Transverse colon (tissue), 4 donors: ENCODE measurements at regions of chr11 and their contacts with region 1.

Region 1: DNA sequence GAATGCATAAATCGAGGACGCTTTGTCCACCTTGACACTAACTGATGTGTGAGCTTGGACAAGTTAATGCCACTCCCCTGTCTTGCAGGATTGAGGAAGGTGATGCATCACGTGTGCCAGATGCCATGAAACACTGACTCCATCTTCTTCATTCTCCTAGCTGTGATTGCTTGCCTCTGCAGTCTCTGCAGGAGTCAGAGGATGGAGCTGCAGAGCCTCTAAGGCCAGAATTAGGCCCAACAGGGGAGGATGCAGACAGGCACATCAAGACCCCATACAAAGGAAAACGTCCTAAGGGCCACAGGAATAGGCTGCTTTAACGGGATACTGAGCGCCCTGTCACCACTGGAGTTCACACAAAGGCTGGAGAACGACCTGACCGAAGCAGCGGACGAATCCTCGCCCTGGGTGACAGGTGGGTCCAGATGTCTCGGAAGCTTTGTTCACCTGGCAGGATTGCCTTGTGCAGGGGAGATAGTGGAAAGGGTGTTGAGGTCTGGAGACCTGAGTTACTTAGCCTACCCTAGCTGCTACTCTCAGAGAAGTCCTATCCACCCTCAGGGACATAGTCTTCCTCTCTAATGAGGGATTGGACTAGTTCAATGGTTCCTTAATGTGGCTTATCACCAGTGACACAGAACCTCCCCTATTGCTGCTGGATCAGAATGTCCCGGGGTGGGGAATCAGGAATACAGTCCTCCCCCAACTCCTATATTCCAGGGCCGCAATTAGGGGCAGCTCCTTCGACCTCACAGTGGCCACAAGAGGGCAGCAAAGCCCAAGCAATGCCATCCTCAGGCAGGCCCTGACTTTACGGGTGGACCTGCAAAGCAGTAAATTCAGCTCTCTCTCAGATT is 32.4 kb downstream of the DBX1 start:
- DNase-seq: peak; percentile 85
- H3K4me3 ChIP-seq: no peak overlapping the region
- H3K27ac ChIP-seq: no peak overlapping the region
- H3K4me1 ChIP-seq: peaks cover 0 to 23% (median 3%) of the 10 kb centered on the region in 4 donors
- H3K27me3 ChIP-seq: peaks cover 4% of the 10 kb centered on the region
- CTCF ChIP-seq: peak; percentile 79 to 88 (median 84)
- EP300 ChIP-seq: no peak
- POLR2A ChIP-seq: no peak

Region 2: GRCh38 chr11:19951558-19952115 is 176.3 kb before region 1 on chr11:
- in situ Hi-C with region 1: loop called in 3 of 4 experiments (anchors 10 to 25 kb)
- intact Hi-C with region 1: loop called (anchors 1 kb)
- DNase-seq: no peak
- H3K4me3 ChIP-seq: no peak overlapping the region
- H3K27ac ChIP-seq: no peak overlapping the region
- H3K4me1 ChIP-seq: peaks cover 6 to 26% (median 12%) of the 10 kb centered on the region in 4 donors
- H3K27me3 ChIP-seq: no peaks in the 10 kb centered on the region
- CTCF ChIP-seq: peak; percentile 67 to 79 (median 73)
- EP300 ChIP-seq: no peak
- POLR2A ChIP-seq: no peak

Region 3: DNA sequence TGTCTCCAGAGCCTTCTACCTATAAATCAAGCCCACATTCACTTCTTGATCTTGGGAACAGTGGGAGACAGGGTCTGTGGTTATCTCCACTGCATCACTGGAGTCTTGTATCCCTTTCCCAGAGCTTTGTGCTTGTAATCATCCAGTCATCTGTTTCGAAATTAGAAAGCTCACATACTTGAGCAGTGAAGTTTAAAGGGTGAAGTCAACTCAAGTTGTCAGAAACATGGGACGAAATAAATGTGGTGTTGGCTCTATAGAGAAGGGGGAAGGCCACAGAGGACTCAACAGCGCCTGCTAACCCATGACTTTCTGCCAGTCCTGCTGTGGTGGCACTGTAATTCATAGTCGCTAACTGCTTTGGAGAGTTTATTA is 165.1 kb before region 1 on chr11:
- in situ Hi-C with region 1: loop called in 3 of 4 experiments (anchors 10 to 25 kb)
- intact Hi-C with region 1: no loop called
- DNase-seq: no peak
- H3K4me3 ChIP-seq: no peak overlapping the region
- H3K27ac ChIP-seq: no peak overlapping the region
- H3K4me1 ChIP-seq: no peaks in the 10 kb centered on the region
- H3K27me3 ChIP-seq: no peaks in the 10 kb centered on the region
- CTCF ChIP-seq: no peak
- EP300 ChIP-seq: no peak
- POLR2A ChIP-seq: no peak

Region 4: DNA sequence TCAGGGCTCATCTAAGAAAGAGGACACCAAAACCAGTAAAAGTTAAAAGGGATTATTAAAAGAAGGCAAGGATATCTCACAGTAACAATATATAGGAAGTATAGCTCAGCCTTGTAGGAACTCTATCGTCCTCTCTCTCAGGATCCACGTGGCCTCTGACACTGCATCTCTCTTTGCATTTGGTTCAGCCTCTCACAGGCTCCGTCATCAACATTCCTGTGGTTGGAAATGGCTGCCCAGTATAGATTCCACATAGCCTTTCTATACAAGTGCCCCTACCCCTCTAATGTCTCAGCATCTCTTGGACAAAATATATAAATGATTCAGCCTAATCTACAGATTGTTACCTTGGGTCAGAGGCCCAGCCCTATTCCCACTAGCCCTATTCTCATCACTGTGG is 133.6 kb after region 1 on chr11:
- in situ Hi-C with region 1: no loop called
- intact Hi-C with region 1: no loop called
- DNase-seq: no peak
- H3K4me3 ChIP-seq: no peak overlapping the region
- H3K27ac ChIP-seq: no peak overlapping the region
- H3K4me1 ChIP-seq: no peaks in the 10 kb centered on the region
- H3K27me3 ChIP-seq: no peaks in the 10 kb centered on the region
- CTCF ChIP-seq: no peak
- EP300 ChIP-seq: no peak
- POLR2A ChIP-seq: no peak

Region 5: DNA sequence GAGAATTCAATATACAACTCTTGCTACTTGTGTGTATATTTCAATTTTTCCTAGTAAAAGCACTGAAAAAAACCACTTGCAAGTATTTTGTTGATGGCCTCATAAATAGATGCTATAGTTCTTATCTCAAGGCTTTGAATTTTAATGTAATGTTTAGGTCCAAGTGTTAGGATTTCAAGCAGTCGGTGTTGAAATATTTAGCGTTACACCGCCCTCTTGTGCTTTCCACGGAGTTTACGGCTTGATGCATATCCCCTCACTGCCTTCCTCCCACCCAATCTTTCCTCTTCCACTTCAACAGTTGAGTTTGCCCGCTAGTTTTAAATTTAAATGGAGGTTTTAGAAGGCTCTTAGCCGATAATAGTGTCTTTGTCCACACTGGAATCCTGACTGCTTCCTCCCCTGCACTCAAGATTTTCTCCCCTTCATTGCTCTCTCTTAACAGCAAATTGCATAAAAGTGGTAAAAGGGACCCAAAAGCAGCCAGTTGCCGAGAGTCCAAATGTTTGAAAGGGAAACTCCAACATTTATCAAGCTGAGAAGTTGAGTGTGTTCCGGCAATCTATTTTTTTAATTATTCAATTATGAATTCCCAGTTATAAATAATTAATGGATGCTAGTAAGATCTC is 209.7 kb after region 1 on chr11:
- in situ Hi-C with region 1: loop called in 1 of 4 experiments (anchors 5 kb)
- intact Hi-C with region 1: no loop called
- DNase-seq: peak; percentile 13
- H3K4me3 ChIP-seq: no peak overlapping the region
- H3K27ac ChIP-seq: no peak overlapping the region
- H3K4me1 ChIP-seq: no peaks in the 10 kb centered on the region
- H3K27me3 ChIP-seq: peaks cover 18% of the 10 kb centered on the region
- CTCF ChIP-seq: peak in 3 of 5 experiments; percentile 26 to 29 (median 27)
- EP300 ChIP-seq: no peak
- POLR2A ChIP-seq: no peak

Region 6: DNA sequence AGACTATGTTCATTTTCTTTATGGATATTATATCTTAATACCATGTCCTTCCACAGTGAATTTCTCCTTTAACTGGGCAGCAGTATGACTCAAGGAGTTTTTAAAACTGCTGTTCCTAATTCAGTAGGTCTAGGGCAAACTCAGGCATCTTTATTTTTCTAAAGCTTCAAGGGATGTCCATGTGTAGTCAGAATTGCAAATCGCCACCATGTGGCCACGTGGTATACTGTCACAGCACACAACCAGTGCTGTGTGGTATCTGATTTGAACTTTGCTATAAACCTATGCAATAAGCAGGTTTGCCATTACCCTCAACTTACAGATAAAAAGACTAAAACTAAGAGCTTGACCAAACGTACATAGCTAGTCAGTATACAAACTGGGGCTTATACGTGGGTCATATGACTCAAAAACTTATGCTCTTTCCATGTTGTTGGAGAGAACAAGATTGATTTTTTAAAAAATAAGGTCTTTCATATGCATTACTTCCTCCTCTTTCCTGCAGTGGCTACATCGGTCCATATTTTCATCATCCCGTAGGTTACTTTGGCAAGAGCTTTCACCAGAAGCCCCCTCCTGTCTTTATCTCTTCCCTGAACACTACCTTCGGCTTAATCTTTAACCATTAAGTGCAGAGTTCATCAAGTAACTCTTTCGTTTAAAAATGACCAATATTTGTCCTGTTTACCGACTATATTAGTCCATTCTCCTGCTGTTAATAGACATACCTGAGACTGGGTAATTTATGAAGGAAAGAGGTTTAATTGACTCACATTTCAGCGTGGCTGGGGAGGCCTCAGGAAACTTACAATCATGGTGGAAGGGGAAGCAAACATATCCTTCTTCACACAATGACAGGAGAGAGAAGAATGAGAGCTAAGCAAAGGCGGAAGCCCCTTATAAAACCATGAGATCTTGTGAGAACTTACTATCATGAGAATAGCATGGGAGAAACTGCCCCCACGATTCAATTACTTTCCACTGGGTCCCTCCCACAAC is 227.6 kb after region 1 on chr11:
- in situ Hi-C with region 1: loop called in 3 of 4 experiments (anchors 10 kb)
- intact Hi-C with region 1: no loop called
- DNase-seq: peak; percentile 51
- H3K4me3 ChIP-seq: no peak overlapping the region
- H3K27ac ChIP-seq: no peak overlapping the region
- H3K4me1 ChIP-seq: peaks cover 0 to 24% (median 9%) of the 10 kb centered on the region in 4 donors
- H3K27me3 ChIP-seq: no peaks in the 10 kb centered on the region
- CTCF ChIP-seq: peak; percentile 51 to 55 (median 55)
- EP300 ChIP-seq: no peak
- POLR2A ChIP-seq: no peak

Region 7: GRCh38 chr11:20609727-20610707 is 482.1 kb after region 1 on chr11:
- in situ Hi-C with region 1: loop called in 1 of 4 experiments (anchors 25 kb)
- intact Hi-C with region 1: no loop called
- DNase-seq: peak; percentile 62
- H3K4me3 ChIP-seq: no peak overlapping the region
- H3K27ac ChIP-seq: no peak overlapping the region
- H3K4me1 ChIP-seq: peaks cover 0 to 6% (median 0%) of the 10 kb centered on the region in 4 donors
- H3K27me3 ChIP-seq: peaks cover 67% of the 10 kb centered on the region
- CTCF ChIP-seq: peak; percentile 66 to 90 (median 86)
- EP300 ChIP-seq: no peak
- POLR2A ChIP-seq: no peak